GM10248 (cell line): ENCODE measurements at regions of chr13 and their contacts with region 1.

Region 1: DNA sequence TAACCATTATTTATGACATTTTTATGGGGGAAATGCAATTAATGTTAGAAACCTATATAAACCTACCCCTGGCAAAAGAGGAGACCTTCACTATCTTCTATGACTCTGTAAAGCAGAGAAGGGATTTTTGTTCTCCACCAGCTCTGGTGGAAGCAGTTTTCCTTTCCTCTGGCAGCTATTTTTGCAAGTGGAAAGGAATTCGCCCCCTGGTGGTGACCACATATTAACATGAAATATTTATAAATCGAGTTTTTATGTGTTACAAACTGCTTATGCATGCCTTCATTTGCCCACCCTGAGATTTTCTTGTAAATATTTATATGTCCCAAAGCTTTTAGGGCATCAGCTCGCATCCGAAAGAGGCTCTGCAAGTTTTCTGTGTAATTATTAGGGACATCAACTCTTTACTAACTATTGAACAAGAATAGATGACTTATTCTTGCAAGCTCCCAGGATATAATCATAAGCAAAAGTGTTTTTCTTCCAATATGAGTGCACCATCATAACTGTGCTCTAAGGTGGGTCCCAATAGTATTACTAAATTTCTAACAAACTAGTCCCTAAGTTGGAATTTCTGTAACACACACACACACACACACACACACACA is 62.4 kb downstream of the SERTM1 start:
- DNase-seq: peak; percentile 19
- CTCF ChIP-seq: peak; percentile 49

Region 2: GRCh38 chr13:36282818-36283445 is 453.3 kb before region 1 on chr13:
- CTCF ChIA-PET with region 1: interaction called, 13 read pairs
- POLR2A ChIA-PET with region 1: no interaction called
- DNase-seq: no peak
- CTCF ChIP-seq: peak; percentile 47

Region 3: DNA sequence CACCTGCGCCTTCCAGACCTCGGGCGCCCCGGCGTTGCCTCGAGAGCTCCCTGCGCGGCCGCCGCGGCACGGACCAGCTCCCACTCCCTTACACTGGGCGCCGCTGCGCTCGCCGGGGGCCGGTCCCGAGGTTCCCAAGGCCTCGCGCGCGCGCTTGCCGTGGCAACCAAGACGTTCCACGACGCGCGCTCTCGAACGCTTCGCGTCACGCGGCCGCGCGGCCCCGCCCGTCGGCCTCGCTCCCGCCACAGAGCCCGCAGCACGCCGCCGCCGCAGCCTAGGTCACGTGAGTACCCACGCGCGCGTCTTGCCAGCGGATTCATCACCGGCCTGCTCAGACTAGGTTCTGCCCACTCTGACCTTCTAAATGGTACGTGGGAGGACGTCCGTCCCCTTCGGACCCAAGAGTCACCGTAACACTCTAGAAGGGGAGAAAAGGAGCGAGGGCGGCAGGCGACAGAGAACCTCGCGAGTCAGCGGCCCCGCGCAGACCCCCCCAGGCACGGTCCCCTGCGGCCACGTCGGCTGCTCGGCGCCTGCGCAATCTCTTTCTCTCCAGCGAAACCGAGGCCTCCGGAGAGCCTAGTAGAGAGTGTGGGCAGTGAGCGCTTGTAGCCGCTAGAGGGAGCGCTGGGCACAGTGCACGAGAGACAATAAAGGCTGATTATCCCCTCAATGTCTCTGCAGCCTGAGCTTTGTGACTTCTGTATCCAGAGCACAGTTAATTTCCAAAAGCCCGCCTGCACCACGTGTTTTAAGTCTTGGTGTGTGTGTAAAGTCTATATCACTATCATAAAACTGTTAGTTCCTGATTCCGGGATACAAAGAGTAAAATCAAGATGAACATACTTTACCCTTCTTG is 389.8 kb before region 1 on chr13 and contains the start of gene SPART:
- CTCF ChIA-PET with region 1: interaction called, 21 read pairs
- POLR2A ChIA-PET with region 1: no interaction called
- DNase-seq: peak; percentile 90
- CTCF ChIP-seq: peak; percentile 93

Region 4: GRCh38 chr13:36724141-36724540 is 12.1 kb before region 1 on chr13:
- CTCF ChIA-PET with region 1: interaction called, 16 read pairs
- POLR2A ChIA-PET with region 1: no interaction called
- DNase-seq: no peak
- CTCF ChIP-seq: no peak

Region 5: DNA sequence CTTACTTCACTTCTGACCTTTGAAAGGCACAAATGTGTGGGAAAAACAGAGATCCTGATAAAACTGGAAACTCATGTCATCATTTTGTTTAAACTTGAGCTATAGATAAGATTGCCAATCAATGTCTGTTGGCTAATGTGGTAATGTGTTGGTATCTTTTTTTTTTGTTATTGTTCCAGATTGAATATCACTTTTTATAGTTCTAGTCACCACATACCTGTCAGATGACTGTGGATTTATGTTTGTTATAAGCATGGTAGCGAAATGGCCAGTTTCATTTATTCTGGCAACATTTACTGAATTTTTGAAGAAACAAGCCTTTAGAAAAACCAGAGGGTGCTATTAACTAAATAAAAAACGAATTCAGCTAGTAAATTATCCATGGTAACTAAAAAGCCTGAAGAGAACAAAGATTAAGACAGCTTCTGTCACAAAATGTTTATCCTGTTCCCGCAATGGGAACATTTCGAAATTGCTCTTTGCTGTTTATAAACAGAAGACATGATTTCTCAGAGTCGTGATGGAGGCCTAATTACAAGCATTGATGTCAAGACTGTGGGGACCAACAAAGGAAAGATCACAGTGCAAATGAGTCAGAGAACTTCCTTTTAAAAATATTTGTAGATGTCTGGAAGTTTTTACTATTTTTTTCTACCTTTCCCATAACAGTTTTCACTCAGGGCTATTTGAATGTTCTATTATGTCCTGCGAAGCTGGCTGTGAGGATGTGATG is 945.2 kb after region 1 on chr13:
- CTCF ChIA-PET with region 1: no interaction called
- POLR2A ChIA-PET with region 1: no interaction called
- DNase-seq: no peak
- CTCF ChIP-seq: no peak

Region 6: DNA sequence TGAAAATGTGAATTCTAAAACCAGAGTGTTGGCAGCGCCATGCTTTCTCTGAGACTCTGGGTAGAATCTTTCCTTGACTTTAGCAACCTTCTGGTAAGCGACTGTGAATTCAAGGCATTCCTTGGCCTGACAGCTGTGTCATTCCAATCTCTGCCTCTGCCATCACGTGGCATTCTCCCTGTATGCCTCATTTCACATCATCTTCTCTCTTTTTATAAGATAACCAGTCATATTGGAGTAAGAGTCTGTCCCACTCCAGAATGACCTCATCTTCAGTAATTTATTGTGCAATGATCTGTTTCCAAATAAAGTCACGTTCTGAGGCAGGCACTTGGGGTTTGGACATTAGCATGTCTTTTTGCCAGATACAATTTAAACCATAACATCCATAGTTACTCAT is 965.7 kb after region 1 on chr13:
- CTCF ChIA-PET with region 1: no interaction called
- POLR2A ChIA-PET with region 1: no interaction called
- DNase-seq: no peak
- CTCF ChIP-seq: no peak